ENCODE measurements at regions of chr2 and their contacts with region 1.

Region 1: GRCh38 chr2:223811757-223812156 is 25.6 kb downstream of the AP1S3 start:
- DNase-seq: no peak
- H3K4me3 ChIP-seq: no peak overlapping the region
- H3K4me3 Mint-ChIP-seq: no peak overlapping the region
- H3K27ac Mint-ChIP-seq: no peak overlapping the region
- H3K4me1 ChIP-seq: peaks cover 16% of the 10 kb centered on the region
- H3K4me1 Mint-ChIP-seq: peaks cover 23% of the 10 kb centered on the region
- H3K27me3 ChIP-seq: no peaks in the 10 kb centered on the region
- H3K27me3 Mint-ChIP-seq: no peaks in the 10 kb centered on the region
- CTCF ChIP-seq: no peak

Region 2: DNA sequence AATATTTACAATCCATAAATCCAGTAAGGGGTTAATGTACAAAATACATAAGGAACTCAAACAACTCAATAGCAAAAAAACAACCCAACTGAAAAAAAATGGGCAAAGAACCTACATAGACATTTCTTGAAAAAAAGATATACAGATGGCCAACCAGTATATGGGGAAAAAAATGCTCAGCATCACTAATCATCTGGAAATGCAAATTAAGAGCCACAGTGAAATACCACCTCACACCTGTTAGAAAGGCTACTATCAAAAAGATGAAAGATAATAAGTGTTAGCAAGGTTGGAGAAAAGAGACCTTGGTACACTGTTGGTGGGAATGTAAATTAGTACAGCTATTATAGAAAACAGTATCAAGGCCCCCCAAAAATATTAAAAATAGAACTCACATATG is 11.1 kb after region 1 on chr2:
- CTCF ChIA-PET with region 1: no interaction called
- POLR2A ChIA-PET with region 1: interaction called, 3 read pairs
- intact Hi-C with region 1: loop called (anchors 1 kb)
- DNase-seq: no peak
- H3K4me3 ChIP-seq: no peak overlapping the region
- H3K4me3 Mint-ChIP-seq: no peak overlapping the region
- H3K27ac Mint-ChIP-seq: no peak overlapping the region
- H3K4me1 ChIP-seq: peaks cover 41% of the 10 kb centered on the region
- H3K4me1 Mint-ChIP-seq: peaks cover 26% of the 10 kb centered on the region
- H3K27me3 ChIP-seq: no peaks in the 10 kb centered on the region
- H3K27me3 Mint-ChIP-seq: no peaks in the 10 kb centered on the region
- CTCF ChIP-seq: no peak